ENCODE measurements at regions of chr4 and their contacts with region 1.

Region 1: DNA sequence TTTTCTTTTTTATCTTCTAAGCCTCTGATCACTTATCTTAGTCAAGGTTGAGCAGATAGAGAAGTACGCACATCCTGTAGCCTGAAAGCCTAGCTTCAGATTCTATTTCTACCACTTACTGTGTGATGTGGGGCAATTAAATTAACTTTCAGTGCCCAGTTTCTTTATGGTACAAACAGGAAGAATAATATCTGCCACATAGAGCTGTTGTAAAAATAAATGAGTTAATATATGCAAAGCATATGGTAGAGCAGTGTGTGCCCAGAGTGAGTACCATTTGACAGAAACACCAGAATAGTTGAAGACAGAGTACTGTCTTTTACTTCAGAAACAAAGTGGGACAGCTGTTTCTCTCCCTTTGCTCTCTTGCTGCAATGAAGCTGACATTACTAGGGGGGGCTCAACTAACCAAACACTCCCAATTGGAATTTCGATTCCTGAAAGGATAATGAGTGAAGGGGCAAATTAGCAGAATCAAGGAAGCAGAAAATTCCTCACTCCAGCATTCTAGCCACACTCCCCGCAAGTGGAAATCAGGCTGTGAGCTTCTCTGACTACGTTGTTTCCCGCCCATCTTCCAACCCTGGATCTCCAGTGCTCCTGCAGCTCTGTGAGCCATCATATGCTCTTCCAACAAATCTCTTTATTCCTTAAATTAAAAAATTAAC is 80.4 kb downstream of the MAPK10 start:
- DNase-seq: no peak
- H3K4me3 ChIP-seq: no peak overlapping the region
- CTCF ChIP-seq: no peak

Region 2: DNA sequence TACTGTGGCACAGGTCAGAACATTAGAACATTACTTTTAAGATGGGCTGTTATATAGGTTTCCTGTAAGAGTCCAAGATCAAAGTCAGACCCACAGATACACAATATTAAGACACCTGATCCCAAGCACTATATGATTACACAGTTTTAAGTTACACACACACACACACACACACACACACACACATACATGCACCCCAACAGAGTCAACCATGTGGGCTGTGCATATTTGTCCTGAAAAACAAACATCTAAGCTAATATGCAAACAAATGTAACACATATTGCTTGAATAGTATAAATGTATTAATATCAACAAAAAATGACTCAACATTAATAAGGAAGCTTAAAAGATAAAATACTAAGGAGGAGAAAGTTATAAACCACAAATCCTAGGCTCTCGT is 31.5 kb after region 1 on chr4:
- in situ Hi-C with region 1: loop called (anchors 5 kb)
- DNase-seq: no peak
- H3K4me3 ChIP-seq: no peak overlapping the region
- CTCF ChIP-seq: no peak

Region 3: GRCh38 chr4:86380243-86380642 is 100.8 kb after region 1 on chr4:
- in situ Hi-C with region 1: loop called (anchors 5 kb)
- DNase-seq: no peak
- H3K4me3 ChIP-seq: no peak overlapping the region
- CTCF ChIP-seq: no peak